ENCODE measurements at regions of chr1 and their contacts with region 1.

Region 1: DNA sequence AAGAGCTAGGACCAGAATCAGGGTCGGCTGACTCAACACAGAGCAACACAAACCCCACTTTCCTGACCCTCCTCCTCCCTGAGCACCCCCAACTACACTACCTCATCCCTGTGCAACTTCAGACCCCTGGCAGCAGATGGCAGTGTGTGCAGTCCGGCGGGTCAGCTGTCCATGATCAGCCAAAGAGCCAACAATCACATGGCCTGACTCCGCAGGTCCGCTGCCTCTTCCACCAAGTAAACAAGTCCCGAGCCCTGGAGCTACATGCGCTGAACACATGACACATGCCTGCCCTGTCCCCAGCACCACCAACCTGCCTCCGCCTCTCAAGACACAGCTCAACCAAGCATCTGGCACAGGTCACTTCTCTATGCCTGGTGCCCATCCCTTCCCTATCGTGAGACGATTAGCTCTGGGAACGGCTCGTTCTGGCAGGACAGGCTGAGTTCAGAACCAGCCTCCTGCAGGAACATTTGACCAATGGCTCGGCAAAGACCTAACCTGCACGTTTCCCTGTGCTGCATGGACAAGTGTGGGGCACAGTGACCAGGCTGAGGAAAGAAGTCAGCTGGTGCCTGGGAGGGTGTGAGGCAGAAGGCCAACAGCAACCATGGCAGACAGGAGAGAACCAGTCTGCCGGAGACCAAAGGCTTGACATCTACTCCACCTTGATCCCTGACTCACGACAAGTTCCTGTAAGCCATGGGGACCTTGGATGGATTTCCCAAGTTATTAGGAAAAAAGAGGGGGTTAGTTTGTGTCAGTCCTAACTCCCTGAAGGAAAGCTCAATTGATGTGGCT is 60.3 kb downstream of the CD46 start:
- DNase-seq: peak in 1 of 2 donors; percentile 81
- ATAC-seq: peak; percentile 69
- H3K4me3 ChIP-seq: no peak overlapping the region
- H3K27ac ChIP-seq: peak overlapping the region; percentile 24 to 78
- H3K4me1 ChIP-seq: peaks cover 4 to 5% of the 10 kb centered on the region in 2 donors
- H3K27me3 ChIP-seq: no peaks in the 10 kb centered on the region

Region 2: GRCh38 chr1:207853372-207853757 is 41.2 kb after region 1 on chr1:
- intact Hi-C with region 1: no loop called
- DNase-seq: no peak
- ATAC-seq: no peak
- H3K4me3 ChIP-seq: no peak overlapping the region
- H3K27ac ChIP-seq: peak overlapping the region in 1 of 2 donors; percentile 25
- H3K4me1 ChIP-seq: peaks cover 7 to 8% of the 10 kb centered on the region in 2 donors
- H3K27me3 ChIP-seq: no peaks in the 10 kb centered on the region

Region 3: GRCh38 chr1:208219659-208220282 is 407.7 kb after region 1 on chr1:
- intact Hi-C with region 1: loop called in 1 of 2 experiments (anchors 10 kb)
- DNase-seq: peak; percentile 84 to 90
- ATAC-seq: peak; percentile 81
- H3K4me3 ChIP-seq: no peak overlapping the region
- H3K27ac ChIP-seq: peak overlapping the region; percentile 73 to 88
- H3K4me1 ChIP-seq: peaks cover 10 to 13% of the 10 kb centered on the region in 2 donors
- H3K27me3 ChIP-seq: no peaks in the 10 kb centered on the region

Region 4: GRCh38 chr1:208251911-208252835 is 440.1 kb after region 1 on chr1:
- intact Hi-C with region 1: no loop called
- DNase-seq: no peak
- ATAC-seq: peak; percentile 8
- H3K4me3 ChIP-seq: no peak overlapping the region
- H3K27ac ChIP-seq: peak overlapping the region in 1 of 2 donors; percentile 55
- H3K4me1 ChIP-seq: peaks cover 4 to 6% of the 10 kb centered on the region in 2 donors
- H3K27me3 ChIP-seq: no peaks in the 10 kb centered on the region